ENCODE measurements at regions of chr16 and their contacts with region 1.

Region 1: GRCh38 chr16:31250782-31251384 is 8.9 kb upstream of the ITGAM start:
- DNase-seq: no peak
- H3K4me3 ChIP-seq: no peak overlapping the region
- H3K27ac ChIP-seq: no peak overlapping the region
- H3K4me1 ChIP-seq: no peaks in the 10 kb centered on the region
- H3K27me3 ChIP-seq: peaks cover 9% of the 10 kb centered on the region
- CTCF ChIP-seq: no peak
- EP300 ChIP-seq: no peak
- POLR2A ChIP-seq: no peak

Region 2: DNA sequence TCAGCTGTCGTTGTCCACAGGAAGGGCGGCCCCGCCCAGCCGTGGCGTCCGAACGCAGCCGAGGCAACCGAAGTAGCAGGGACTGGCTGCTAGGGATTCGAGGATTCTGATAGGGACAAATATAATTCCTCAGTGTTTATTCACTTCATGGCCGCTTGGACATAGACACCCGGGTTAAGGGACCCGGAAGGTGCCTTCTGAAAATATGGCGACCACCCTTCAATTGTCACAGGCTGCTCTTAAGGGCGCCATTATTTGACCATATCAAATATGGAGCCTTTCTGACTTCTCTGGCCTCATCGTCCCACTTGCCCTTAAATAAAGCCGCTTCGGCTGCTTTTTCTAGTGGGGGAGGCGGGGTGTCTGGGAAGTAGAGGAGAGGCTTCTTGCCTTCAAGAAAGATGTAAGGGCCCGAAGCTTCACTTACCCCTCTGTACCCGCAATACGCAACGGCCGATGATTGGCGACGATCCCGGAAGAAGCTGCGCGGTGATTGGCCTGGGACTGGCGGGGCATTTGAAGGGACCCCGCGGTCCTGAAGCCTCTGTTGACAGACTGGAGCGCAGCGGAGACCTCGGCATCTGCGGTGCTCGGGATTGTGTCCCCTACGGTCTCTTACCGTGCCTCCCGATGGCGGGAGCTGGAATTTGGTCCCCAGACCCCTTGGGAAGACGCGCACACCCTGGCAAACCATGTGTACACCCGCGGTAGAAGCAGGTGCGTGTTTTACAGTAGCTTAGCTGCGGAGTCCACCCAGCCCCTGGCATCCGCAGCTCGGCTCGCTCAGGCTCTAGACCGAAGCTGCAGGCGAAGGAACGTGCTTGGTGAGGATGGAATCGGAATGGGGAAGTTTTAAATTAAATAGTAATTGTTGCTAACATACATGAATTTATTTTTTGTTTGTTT is 678.9 kb before region 1 on chr16 and contains the start of gene ZNF688:
- in situ Hi-C with region 1: no loop called
- intact Hi-C with region 1: no loop called
- DNase-seq: peak; percentile 96
- H3K4me3 ChIP-seq: peak within 1 kb of the TSS; percentile 81 to 92 (median 82)
- H3K27ac ChIP-seq: peak within 1 kb of the TSS; percentile 99 to 100 (median 99)
- H3K4me1 ChIP-seq: peaks cover 12 to 34% (median 24%) of the 10 kb centered on the region in 4 donors
- H3K27me3 ChIP-seq: no peaks in the 10 kb centered on the region
- CTCF ChIP-seq: peak in 1 of 5 experiments; percentile 39
- EP300 ChIP-seq: no peak
- POLR2A ChIP-seq: peak; percentile 74
- total RNA-seq, gene ZNF688: 22.9 to 64.3 (median 43.5) TPM

Region 3: GRCh38 chr16:31262084-31262483 is 11.2 kb after region 1 on chr16:
- in situ Hi-C with region 1: no loop called
- intact Hi-C with region 1: loop called (anchors 1 kb)
- DNase-seq: no peak
- H3K4me3 ChIP-seq: no peak overlapping the region
- H3K27ac ChIP-seq: no peak overlapping the region
- H3K4me1 ChIP-seq: peaks cover 0 to 9% (median 0%) of the 10 kb centered on the region in 4 donors
- H3K27me3 ChIP-seq: no peaks in the 10 kb centered on the region
- CTCF ChIP-seq: no peak
- EP300 ChIP-seq: no peak
- POLR2A ChIP-seq: no peak

Region 4: GRCh38 chr16:31489616-31490584 is 239.0 kb after region 1 on chr16:
- in situ Hi-C with region 1: no loop called
- intact Hi-C with region 1: no loop called
- DNase-seq: no peak
- H3K4me3 ChIP-seq: no peak overlapping the region
- H3K27ac ChIP-seq: no peak overlapping the region
- H3K4me1 ChIP-seq: peaks cover 4 to 22% (median 17%) of the 10 kb centered on the region in 4 donors
- H3K27me3 ChIP-seq: peaks cover 8% of the 10 kb centered on the region
- CTCF ChIP-seq: no peak
- EP300 ChIP-seq: no peak
- POLR2A ChIP-seq: no peak